ENCODE measurements at regions of chr3 and their contacts with region 1.

Region 1: DNA sequence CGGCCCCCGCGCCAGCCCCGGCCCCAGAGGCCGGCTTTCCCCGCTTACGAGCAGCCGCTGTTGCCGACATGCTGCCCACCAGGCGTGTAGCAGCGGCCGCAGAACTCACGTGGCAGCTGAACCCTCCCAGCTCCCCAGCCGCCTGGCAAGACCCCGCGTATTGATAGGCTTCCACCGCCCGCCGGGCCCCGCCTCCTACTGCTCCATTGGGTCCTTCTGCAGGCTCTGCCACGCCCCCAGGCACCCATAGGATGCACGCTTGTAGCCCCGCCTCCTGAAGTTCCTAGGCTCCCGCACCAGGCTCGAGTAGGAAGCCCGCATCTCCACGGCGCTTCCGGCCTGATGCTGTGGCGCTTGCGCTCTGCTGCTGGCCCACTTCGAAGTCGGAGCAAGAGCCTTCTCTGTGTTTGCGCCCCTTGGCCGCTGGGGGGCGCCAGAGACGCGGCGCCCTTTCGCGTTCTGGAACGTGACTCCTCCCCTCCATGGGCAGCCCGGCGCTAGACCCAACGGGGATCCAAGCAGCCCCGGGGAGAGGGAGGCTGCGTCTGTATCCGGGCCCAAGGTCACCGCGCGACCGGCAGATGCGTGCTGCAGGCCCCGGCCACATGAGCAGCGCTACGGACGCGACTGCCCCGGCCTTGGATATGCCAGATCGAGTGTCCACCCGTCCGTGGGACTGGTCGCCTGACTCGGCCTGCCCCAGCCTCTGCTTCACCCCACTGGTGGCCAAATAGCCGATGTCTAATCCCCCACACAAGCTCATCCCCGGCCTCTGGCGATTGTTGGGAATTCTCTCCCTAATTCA is at the starts of genes PARP3 and RRP9:
- DNase-seq: peak; percentile 98 to 100
- ATAC-seq: peak; percentile 91 to 98 (median 92)
- H3K4me3 ChIP-seq: peak within 1 kb of the TSS; percentile 77
- H3K4me3 Mint-ChIP-seq: peak within 1 kb of the TSS; percentile 97
- H3K27ac ChIP-seq: peak within 1 kb of the TSS; percentile 87
- H3K27ac Mint-ChIP-seq: peak within 1 kb of the TSS; percentile 79 to 88
- H3K4me1 ChIP-seq: peaks cover 32% of the 10 kb centered on the region
- H3K4me1 Mint-ChIP-seq: peaks cover 22 to 51% of the 10 kb centered on the region in 2 donors
- H3K27me3 ChIP-seq: no peaks in the 10 kb centered on the region
- H3K27me3 Mint-ChIP-seq: no peaks in the 10 kb centered on the region
- CTCF ChIP-seq: peak; percentile 97
- total RNA-seq, gene PARP3: 4.6 to 7.4 (median 5.6) TPM
- total RNA-seq, gene RRP9: 11.2 to 13.0 (median 12.7) TPM

Region 2: DNA sequence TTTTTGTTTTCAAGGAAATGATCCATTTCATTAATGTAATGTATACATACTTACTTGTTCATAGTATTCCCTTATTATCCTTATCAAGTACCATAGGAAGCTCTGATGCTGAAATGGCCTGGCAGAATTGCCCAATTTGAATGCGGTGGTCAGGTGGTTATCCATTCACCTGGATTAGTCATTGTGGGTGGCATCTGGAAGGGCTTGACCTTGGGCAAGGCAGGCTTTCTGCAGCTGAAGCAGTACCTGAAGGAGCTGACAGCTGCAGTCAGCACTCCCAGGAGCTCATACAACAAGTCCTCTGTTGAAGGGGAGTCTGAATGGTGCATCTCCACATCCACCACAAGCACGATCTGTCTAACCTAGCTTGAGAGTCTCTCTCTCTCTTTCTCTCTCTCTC is 54.4 kb before region 1 on chr3:
- intact Hi-C with region 1: no loop called
- DNase-seq: no peak
- ATAC-seq: no peak
- H3K4me3 ChIP-seq: no peak overlapping the region
- H3K4me3 Mint-ChIP-seq: no peak overlapping the region
- H3K27ac ChIP-seq: no peak overlapping the region
- H3K27ac Mint-ChIP-seq: no peak overlapping the region
- H3K4me1 ChIP-seq: no peaks in the 10 kb centered on the region
- H3K4me1 Mint-ChIP-seq: peaks cover 5 to 11% of the 10 kb centered on the region in 2 donors
- H3K27me3 ChIP-seq: peaks cover 4% of the 10 kb centered on the region
- H3K27me3 Mint-ChIP-seq: peaks cover 30 to 45% of the 10 kb centered on the region in 2 donors
- CTCF ChIP-seq: no peak

Region 3: DNA sequence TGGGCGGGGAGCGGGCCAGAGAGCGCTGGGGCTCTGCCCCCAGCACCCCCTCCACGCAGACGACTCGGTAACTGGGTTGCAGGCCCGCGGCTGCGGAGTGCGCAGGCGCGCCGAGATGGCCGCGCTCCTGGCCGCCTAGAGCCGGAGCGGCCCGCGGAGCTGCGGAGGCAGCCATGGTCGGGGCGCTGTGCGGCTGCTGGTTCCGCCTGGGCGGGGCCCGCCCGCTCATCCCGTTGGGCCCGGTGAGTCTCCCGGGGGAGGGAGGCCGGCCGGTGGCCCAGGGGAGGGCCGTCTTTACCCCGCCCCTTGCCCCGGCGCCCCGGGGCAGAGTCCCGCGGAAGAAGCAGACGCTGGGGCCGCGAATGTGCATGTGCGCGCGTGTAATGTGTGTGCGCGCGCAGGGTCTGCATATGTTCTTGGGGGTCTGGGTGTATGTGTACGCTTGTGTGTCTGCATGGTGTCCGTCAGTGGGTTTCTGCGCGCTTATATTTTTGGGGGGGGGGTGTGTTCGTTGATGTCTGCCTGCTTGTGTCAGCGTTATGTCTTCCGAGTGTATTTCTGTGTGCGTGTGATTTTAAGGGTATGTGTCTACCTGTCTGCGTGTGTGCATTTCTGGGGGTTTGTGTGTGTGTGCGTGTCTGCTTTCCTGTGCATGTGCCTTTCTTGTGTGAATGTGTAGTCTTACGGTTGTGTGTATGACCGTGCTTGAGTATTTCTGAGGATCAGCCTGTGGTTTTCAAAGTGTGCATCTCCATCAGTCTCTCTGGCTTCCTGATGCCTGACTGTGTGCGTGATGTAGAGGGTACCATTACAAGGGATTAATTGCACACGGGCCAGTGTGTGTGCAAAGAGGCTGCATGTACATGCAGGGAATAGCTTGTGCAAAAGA is 33.2 kb after region 1 on chr3 and contains the start of gene ABHD14A:
- intact Hi-C with region 1: loop called (anchors 1 kb)
- DNase-seq: peak; percentile 70 to 90
- ATAC-seq: peak; percentile 77 to 82 (median 78)
- H3K4me3 ChIP-seq: peak within 1 kb of the TSS; percentile 87
- H3K4me3 Mint-ChIP-seq: peak within 1 kb of the TSS; percentile 99
- H3K27ac ChIP-seq: peak within 1 kb of the TSS; percentile 53
- H3K27ac Mint-ChIP-seq: peak within 1 kb of the TSS; percentile 86 to 90
- H3K4me1 ChIP-seq: peaks cover 41% of the 10 kb centered on the region
- H3K4me1 Mint-ChIP-seq: peaks cover 27 to 36% of the 10 kb centered on the region in 2 donors
- H3K27me3 ChIP-seq: no peaks in the 10 kb centered on the region
- H3K27me3 Mint-ChIP-seq: no peaks in the 10 kb centered on the region
- CTCF ChIP-seq: no peak
- total RNA-seq, gene ABHD14A: 12.0 to 14.7 (median 13.4) TPM

Region 4: GRCh38 chr3:52056968-52057805 is 115.2 kb after region 1 on chr3:
- intact Hi-C with region 1: loop called (anchors 2 kb)
- DNase-seq: peak; percentile 97 to 99
- ATAC-seq: peak; percentile 84 to 93 (median 87)
- H3K4me3 ChIP-seq: peak overlapping the region; percentile 49
- H3K4me3 Mint-ChIP-seq: peak overlapping the region; percentile 93
- H3K27ac ChIP-seq: peak overlapping the region; percentile 73
- H3K27ac Mint-ChIP-seq: peak overlapping the region; percentile 92 to 93
- H3K4me1 ChIP-seq: peaks cover 56% of the 10 kb centered on the region
- H3K4me1 Mint-ChIP-seq: peaks cover 38 to 43% of the 10 kb centered on the region in 2 donors
- H3K27me3 ChIP-seq: no peaks in the 10 kb centered on the region
- H3K27me3 Mint-ChIP-seq: peaks cover 0 to 2% of the 10 kb centered on the region in 2 donors
- CTCF ChIP-seq: no peak

Region 5: GRCh38 chr3:52144034-52144795 is 202.2 kb after region 1 on chr3:
- intact Hi-C with region 1: loop called (anchors 1 kb)
- DNase-seq: peak; percentile 82 to 93
- ATAC-seq: peak; percentile 94 to 100 (median 99)
- H3K4me3 ChIP-seq: no peak overlapping the region
- H3K4me3 Mint-ChIP-seq: no peak overlapping the region
- H3K27ac ChIP-seq: no peak overlapping the region
- H3K27ac Mint-ChIP-seq: peak overlapping the region in 1 of 2 donors; percentile 77
- H3K4me1 ChIP-seq: peaks cover 7% of the 10 kb centered on the region
- H3K4me1 Mint-ChIP-seq: peaks cover 6 to 7% of the 10 kb centered on the region in 2 donors
- H3K27me3 ChIP-seq: no peaks in the 10 kb centered on the region
- H3K27me3 Mint-ChIP-seq: no peaks in the 10 kb centered on the region
- CTCF ChIP-seq: peak; percentile 88